ENCODE measurements at regions of chr9 and their contacts with region 1.

Region 1: GRCh38 chr9:134698587-134699342 is 57.2 kb downstream of the COL5A1 start:
- ATAC-seq: peak; percentile 73 to 90 (median 87)
- H3K4me3 ChIP-seq: no peak overlapping the region
- H3K27ac ChIP-seq: no peak overlapping the region
- H3K4me1 ChIP-seq: peaks cover 4 to 5% of the 10 kb centered on the region in 2 donors

Region 2: DNA sequence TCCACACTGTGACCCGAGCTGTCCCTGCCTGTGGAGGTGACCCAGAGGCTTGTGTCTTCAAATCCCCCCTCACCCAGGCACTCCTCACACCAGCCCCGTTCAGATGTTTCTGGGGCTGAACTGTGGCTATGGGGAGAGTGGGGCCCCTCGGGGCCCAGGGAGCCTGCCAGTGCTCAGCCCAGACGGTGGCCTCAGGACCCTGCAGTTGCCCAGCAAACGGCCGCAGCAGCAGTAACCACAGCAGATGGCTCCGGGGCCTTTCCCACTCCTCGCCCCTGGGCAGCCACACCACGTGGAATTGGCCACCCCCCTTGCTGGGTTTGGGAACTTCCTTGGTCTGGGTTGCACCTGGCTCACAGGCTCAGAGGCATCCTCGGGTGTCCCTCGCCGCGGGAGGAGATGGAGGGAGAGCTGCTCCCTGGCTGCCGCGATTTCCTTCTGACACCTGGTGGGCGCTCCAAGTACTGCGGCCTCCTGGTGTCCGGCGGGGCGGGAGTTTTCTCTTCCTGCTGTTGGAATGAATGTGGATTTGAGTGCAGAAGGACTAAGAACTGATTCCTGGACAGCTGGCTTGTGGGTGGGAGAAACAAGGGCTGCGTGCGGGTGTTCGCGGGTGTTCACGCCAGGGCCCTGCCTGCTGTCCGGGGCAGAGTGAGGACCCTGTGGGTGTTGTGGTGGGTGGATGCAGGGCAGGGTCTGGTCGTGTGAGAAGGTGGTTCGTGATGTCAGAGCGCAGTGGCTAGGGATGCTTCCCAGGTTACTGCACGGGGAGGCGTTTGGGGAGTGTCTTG is 40.3 kb after region 1 on chr9:
- in situ Hi-C with region 1: loop called in 1 of 9 experiments (anchors 10 kb)
- ATAC-seq: peak; percentile 46 to 84 (median 80)
- H3K4me3 ChIP-seq: no peak overlapping the region
- H3K27ac ChIP-seq: no peak overlapping the region
- H3K4me1 ChIP-seq: peaks cover 31% of the 10 kb centered on the region in 2 donors

Region 3: DNA sequence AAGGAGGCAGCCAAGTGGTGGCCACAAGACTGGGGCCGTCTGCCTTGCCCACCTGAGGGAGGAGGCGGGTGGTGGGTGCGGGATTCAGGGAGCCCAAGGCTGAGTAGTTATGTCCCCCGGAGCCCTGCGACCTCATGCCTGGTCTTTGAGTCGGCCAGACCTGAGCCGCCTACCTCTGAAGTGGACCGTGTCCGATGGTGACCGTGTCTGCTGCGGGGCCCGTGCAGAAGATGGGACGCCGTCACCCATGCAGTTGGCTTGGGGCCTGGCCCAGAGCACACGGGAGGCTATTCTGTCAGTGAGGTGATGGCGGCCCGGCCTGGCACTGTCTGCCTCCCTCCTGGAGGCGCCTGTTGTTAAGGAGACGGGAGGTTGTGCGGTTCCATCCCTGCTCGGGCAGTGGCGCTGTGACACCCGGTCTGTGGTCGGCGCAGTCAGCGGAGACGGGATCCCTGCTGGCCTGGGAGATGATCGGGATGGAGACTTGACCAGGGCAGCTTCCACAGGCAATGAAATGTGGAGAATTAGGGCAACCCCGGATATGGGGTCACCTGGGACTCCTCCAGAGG is 119.3 kb after region 1 on chr9:
- in situ Hi-C with region 1: no loop called
- ATAC-seq: peak in 1 of 8 experiments; percentile 11
- H3K4me3 ChIP-seq: no peak overlapping the region
- H3K27ac ChIP-seq: no peak overlapping the region
- H3K4me1 ChIP-seq: peaks cover 0 to 10% of the 10 kb centered on the region in 2 donors

Region 4: DNA sequence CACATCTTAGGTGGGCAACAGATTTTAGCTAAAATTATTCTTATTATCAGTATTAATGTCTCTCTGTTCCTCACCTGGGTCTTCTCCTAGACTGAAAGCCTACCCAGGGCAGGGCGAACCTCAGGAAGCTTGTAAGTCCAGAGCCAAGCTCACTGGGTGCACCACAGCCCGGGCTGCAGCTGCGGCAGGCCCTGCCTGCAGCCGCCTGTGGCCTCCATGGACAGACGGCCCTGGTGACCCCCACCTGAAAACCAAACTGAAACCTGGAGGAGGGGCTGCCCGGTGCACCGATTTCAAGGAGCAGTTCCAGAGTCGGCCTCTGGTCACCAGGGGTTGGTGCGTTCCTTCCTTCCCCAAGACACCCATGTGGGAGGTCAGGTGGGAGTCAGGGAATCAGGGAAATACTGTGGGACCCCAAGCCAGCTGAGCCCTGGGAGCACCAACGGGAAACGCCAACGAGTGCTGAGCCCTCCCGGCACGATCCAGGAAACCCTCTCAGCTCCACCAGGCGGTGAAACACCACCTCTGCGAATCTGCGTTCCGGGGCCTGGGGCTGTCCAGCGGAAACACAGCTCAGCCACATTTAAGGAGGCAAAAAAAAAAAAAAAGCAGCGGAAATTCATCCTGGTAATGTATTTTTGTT is 712.2 kb after region 1 on chr9:
- in situ Hi-C with region 1: loop called in 2 of 9 experiments (anchors 25 kb)
- ATAC-seq: no peak
- H3K4me3 ChIP-seq: no peak overlapping the region
- H3K27ac ChIP-seq: no peak overlapping the region
- H3K4me1 ChIP-seq: no peaks in the 10 kb centered on the region

Measured in motor neuron (in vitro differentiated cells).